ENCODE measurements at regions of chr14 and their contacts with region 1.

Region 1: DNA sequence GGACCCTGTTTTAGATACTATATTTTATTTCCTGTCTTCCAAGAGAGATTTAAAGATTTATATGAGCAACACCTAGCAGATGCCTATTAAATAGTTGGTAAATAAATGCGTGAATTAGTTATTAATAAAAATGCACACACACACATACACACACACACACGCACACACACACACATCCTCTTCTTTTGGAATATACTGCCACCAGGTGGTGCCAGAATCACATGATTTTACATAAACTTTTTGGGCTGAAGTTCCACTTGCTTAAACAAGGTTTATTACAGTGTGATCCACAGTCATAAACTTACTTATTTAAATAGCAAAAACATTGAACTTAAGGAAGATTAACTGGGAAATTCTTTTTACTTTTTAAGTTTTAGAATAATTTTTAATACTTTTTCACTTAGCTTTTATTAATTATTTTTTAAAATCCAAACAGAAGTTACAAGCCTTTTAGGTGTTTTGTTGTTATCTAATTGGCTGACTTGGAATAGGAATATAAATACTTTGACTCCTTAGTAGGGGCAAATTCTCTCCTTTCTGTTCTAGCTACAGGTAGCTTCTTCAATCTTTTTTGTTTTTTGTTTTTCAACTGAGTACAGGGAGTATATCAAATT is 17.5 kb downstream of the RAD51B start:
- DNase-seq: peak; percentile 83
- ATAC-seq: peak; percentile 64
- H3K4me3 ChIP-seq: no peak overlapping the region
- H3K4me3 Mint-ChIP-seq: no peak overlapping the region
- H3K27ac ChIP-seq: no peak overlapping the region
- H3K27ac Mint-ChIP-seq: no peak overlapping the region
- H3K4me1 ChIP-seq: no peaks in the 10 kb centered on the region
- H3K4me1 Mint-ChIP-seq: no peaks in the 10 kb centered on the region
- H3K27me3 ChIP-seq: no peaks in the 10 kb centered on the region
- H3K27me3 Mint-ChIP-seq: no peaks in the 10 kb centered on the region
- CTCF ChIP-seq: peak; percentile 72

Region 2: GRCh38 chr14:67763158-67763788 is 73.8 kb before region 1 on chr14:
- CTCF ChIA-PET with region 1: no interaction called
- POLR2A ChIA-PET with region 1: no interaction called
- intact Hi-C with region 1: no loop called
- DNase-seq: no peak
- ATAC-seq: no peak
- H3K4me3 ChIP-seq: no peak overlapping the region
- H3K4me3 Mint-ChIP-seq: no peak overlapping the region
- H3K27ac ChIP-seq: no peak overlapping the region
- H3K27ac Mint-ChIP-seq: no peak overlapping the region
- H3K4me1 ChIP-seq: peaks cover 12 to 14% of the 10 kb centered on the region in 2 donors
- H3K4me1 Mint-ChIP-seq: peaks cover 16% of the 10 kb centered on the region
- H3K27me3 ChIP-seq: no peaks in the 10 kb centered on the region
- H3K27me3 Mint-ChIP-seq: no peaks in the 10 kb centered on the region
- CTCF ChIP-seq: no peak

Region 3: DNA sequence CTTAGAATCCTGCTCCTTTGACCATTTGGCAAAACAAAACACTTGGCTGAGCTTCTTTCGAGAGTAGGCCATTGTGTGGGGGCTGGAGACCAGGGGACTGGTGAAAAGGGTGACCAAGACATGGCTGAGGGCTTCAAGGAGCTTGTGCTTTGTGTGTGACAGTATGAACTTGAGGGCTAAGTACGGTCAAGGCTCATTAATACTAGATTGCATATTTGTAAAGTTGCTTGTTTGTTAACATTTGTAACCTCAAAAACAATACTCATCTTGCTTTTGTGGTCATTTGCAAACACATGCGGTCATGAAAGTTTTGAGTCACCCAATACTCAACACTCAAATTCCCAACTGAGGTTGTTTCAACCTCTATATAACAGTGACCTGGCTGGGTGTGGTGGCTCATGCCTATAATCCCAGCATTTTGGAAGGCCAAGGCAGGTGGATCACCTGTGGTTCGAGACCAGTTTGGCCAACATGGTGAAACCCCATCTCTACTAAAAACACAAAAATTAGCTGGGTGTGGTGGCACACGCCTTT is 63.2 kb before region 1 on chr14:
- CTCF ChIA-PET with region 1: no interaction called
- POLR2A ChIA-PET with region 1: no interaction called
- intact Hi-C with region 1: no loop called
- DNase-seq: no peak
- ATAC-seq: no peak
- H3K4me3 ChIP-seq: no peak overlapping the region
- H3K4me3 Mint-ChIP-seq: no peak overlapping the region
- H3K27ac ChIP-seq: no peak overlapping the region
- H3K27ac Mint-ChIP-seq: no peak overlapping the region
- H3K4me1 ChIP-seq: no peaks in the 10 kb centered on the region
- H3K4me1 Mint-ChIP-seq: no peaks in the 10 kb centered on the region
- H3K27me3 ChIP-seq: no peaks in the 10 kb centered on the region
- H3K27me3 Mint-ChIP-seq: no peaks in the 10 kb centered on the region
- CTCF ChIP-seq: no peak

Region 4: DNA sequence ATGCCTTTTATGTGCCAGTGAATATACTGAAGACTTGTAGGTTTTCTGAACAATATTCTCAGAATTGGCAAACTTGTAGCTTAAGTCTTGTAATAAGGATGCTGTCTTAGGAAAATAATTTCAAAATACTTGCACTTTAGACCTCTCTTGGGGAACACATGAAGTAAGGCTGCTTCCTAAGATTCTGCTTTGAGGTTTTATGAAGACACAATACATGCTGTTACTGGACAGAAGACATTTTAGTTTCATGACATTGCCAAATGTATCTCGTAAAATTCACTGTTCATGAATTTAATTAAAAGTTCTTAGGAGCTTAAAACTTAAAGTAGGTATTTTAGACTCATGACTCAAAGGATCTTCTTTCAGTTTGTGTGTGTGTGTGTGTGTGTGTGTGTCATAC is 63.1 kb after region 1 on chr14:
- CTCF ChIA-PET with region 1: no interaction called
- POLR2A ChIA-PET with region 1: no interaction called
- intact Hi-C with region 1: no loop called
- DNase-seq: no peak
- ATAC-seq: no peak
- H3K4me3 ChIP-seq: no peak overlapping the region
- H3K4me3 Mint-ChIP-seq: no peak overlapping the region
- H3K27ac ChIP-seq: no peak overlapping the region
- H3K27ac Mint-ChIP-seq: no peak overlapping the region
- H3K4me1 ChIP-seq: no peaks in the 10 kb centered on the region
- H3K4me1 Mint-ChIP-seq: no peaks in the 10 kb centered on the region
- H3K27me3 ChIP-seq: no peaks in the 10 kb centered on the region
- H3K27me3 Mint-ChIP-seq: no peaks in the 10 kb centered on the region
- CTCF ChIP-seq: no peak

Region 5: GRCh38 chr14:67951529-67952135 is 114.5 kb after region 1 on chr14:
- CTCF ChIA-PET with region 1: no interaction called
- POLR2A ChIA-PET with region 1: no interaction called
- intact Hi-C with region 1: no loop called
- DNase-seq: no peak
- ATAC-seq: no peak
- H3K4me3 ChIP-seq: no peak overlapping the region
- H3K4me3 Mint-ChIP-seq: no peak overlapping the region
- H3K27ac ChIP-seq: no peak overlapping the region
- H3K27ac Mint-ChIP-seq: no peak overlapping the region
- H3K4me1 ChIP-seq: no peaks in the 10 kb centered on the region
- H3K4me1 Mint-ChIP-seq: no peaks in the 10 kb centered on the region
- H3K27me3 ChIP-seq: no peaks in the 10 kb centered on the region
- H3K27me3 Mint-ChIP-seq: no peaks in the 10 kb centered on the region
- CTCF ChIP-seq: no peak

Region 6: DNA sequence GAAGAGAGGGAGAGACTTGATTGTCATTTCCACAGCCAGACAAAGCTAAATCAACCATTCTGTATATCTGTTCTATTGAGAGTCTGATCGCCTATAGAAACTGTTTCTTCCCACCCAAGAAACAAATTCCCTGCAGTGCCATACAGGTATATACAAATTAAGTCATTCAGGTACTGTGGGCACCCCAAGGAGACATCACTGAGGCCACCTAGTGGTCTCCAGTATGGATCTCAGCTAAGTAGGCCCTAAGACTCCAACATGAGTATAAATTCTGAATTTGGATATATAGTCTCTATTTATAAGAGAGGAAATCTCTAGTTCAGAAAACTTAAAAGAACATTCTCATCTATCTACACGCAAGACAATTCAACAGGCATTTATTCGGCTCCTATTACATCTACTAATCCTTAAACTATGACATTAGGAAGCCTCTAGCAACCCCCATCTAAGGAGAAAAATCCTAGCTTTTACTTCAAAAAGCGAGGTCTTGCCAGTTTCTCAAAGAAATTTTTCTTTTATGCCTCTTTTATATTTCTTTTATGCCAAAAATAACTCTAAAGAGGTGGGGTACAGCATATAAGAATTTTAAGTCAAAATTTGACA is 1253.2 kb after region 1 on chr14:
- CTCF ChIA-PET with region 1: no interaction called
- POLR2A ChIA-PET with region 1: no interaction called
- intact Hi-C with region 1: loop called (anchors 5 kb)
- DNase-seq: peak; percentile 24
- ATAC-seq: no peak
- H3K4me3 ChIP-seq: no peak overlapping the region
- H3K4me3 Mint-ChIP-seq: no peak overlapping the region
- H3K27ac ChIP-seq: no peak overlapping the region
- H3K27ac Mint-ChIP-seq: no peak overlapping the region
- H3K4me1 ChIP-seq: no peaks in the 10 kb centered on the region
- H3K4me1 Mint-ChIP-seq: no peaks in the 10 kb centered on the region
- H3K27me3 ChIP-seq: no peaks in the 10 kb centered on the region
- H3K27me3 Mint-ChIP-seq: no peaks in the 10 kb centered on the region
- CTCF ChIP-seq: peak; percentile 58

Region 7: DNA sequence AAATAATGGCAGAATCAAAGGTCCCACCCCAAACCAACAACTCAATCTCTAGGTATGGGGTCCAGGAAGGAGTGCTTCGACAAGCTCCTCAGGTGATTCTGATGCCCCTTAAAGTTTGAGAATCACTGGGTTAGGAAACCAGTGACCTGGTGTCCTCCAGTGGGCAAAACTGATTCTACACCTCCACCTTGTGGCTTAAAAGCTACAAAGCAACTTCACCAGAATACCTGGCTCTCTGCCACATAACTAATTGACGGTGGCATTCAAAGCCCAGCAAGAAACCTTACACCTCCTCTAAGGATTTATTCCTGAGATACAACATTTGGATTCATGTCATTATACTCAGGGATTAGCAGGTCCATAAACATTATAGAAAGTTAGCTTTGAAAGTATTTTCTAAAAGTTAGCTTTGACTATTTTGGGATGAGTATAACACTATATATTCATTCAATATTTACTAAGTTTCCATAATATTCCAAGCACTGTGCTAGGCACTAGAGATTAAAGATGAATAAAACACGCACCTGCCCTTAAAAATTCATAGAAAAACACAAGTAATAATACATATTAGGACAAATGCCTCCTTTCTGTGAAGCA is 1270.4 kb after region 1 on chr14:
- CTCF ChIA-PET with region 1: no interaction called
- POLR2A ChIA-PET with region 1: no interaction called
- intact Hi-C with region 1: loop called (anchors 5 kb)
- DNase-seq: peak; percentile 44
- ATAC-seq: no peak
- H3K4me3 ChIP-seq: no peak overlapping the region
- H3K4me3 Mint-ChIP-seq: no peak overlapping the region
- H3K27ac ChIP-seq: no peak overlapping the region
- H3K27ac Mint-ChIP-seq: no peak overlapping the region
- H3K4me1 ChIP-seq: no peaks in the 10 kb centered on the region
- H3K4me1 Mint-ChIP-seq: no peaks in the 10 kb centered on the region
- H3K27me3 ChIP-seq: no peaks in the 10 kb centered on the region
- H3K27me3 Mint-ChIP-seq: no peaks in the 10 kb centered on the region
- CTCF ChIP-seq: peak; percentile 64

Measured in B cell (primary cell).